Activated CD4-positive, alpha-beta memory T cell treated with anti-CD3 and anti-CD28 coated beads for 36 hours (primary cell): ENCODE measurements at regions of chr18 and their contacts with region 1.

Region 1: GRCh38 chr18:69885841-69886531 is 61.7 kb downstream of the CD226 start:
- DNase-seq: peak; percentile 85
- H3K4me3 Mint-ChIP-seq: peak overlapping the region; percentile 73
- H3K27ac Mint-ChIP-seq: peak overlapping the region; percentile 97
- H3K4me1 Mint-ChIP-seq: peaks cover 86% of the 10 kb centered on the region
- H3K27me3 Mint-ChIP-seq: no peaks in the 10 kb centered on the region

Region 2: DNA sequence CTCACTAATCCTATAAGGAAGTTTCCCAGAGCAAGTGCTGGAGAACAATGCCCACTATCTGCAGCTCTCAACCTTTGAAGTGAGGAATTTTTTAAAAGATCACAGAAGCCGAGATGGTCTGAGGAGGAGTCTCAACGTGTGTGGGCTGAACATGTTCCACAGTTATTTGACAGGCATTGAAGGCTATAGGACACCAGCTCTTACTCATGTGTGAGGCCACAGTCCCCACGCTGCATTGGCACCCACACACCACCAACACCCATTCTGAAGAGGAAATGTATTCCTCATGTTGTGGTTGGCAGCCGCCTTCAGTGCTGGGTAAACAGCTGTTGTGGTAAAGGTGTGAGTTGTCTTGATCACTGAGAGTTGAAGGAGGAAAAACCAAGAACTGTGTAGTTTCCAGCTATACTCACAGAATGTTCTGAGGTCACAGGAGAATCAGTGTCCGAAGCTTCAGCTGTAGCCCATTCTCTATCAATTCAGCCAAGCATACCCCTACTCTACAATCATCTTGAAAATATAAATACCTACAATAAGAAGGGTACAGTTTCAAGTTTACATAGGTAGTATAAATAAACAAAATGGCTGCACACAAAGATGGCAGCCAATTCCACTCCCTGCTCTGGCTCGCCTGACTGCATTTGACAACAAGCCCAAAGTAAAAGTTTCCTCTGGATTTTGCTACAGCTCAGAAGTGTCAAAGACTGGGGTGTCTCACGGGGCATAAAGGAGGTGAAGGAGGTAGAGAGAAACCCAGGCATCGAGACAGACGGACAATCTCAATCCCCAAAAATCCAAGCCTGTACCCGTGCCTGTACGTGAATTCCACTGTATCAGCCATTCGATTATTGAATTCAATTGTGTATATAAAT is 49.6 kb after region 1 on chr18:
- CTCF ChIA-PET with region 1: interaction called, 9 read pairs
- POLR2A ChIA-PET with region 1: interaction called, 22 read pairs
- intact Hi-C with region 1: loop called (anchors 1 kb)
- DNase-seq: peak; percentile 94
- H3K4me3 Mint-ChIP-seq: no peak overlapping the region
- H3K27ac Mint-ChIP-seq: no peak overlapping the region
- H3K4me1 Mint-ChIP-seq: peaks cover 37% of the 10 kb centered on the region
- H3K27me3 Mint-ChIP-seq: no peaks in the 10 kb centered on the region

Region 3: DNA sequence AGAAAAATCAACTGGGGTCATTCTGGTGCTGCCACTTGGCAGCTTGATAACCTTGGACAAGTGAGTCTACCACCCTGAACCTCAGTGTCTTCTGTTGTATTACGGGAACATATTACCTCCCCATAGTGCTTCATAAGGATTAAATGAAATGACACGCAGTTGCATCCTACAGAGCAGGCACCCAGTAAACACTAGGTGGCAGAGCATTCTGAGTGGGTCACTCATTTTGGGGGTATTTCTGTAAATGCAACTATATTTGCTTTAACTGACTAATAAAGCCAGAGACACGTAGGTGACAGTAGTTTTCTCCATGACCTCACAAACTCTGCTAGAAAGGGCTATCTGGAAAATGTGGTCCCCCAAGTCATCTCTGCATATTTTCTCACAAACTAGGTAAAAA is 57.0 kb after region 1 on chr18:
- CTCF ChIA-PET with region 1: interaction called, 3 read pairs
- POLR2A ChIA-PET with region 1: interaction called, 34 read pairs
- intact Hi-C with region 1: loop called (anchors 1 kb)
- DNase-seq: peak; percentile 50
- H3K4me3 Mint-ChIP-seq: peak overlapping the region; percentile 63
- H3K27ac Mint-ChIP-seq: peak overlapping the region; percentile 94
- H3K4me1 Mint-ChIP-seq: peaks cover 84% of the 10 kb centered on the region
- H3K27me3 Mint-ChIP-seq: no peaks in the 10 kb centered on the region

Region 4: GRCh38 chr18:69948919-69949537 is 63.0 kb after region 1 on chr18:
- CTCF ChIA-PET with region 1: interaction called, 3 read pairs
- POLR2A ChIA-PET with region 1: interaction called, 34 read pairs
- intact Hi-C with region 1: loop called (anchors 1 kb)
- DNase-seq: peak; percentile 85
- H3K4me3 Mint-ChIP-seq: no peak overlapping the region
- H3K27ac Mint-ChIP-seq: no peak overlapping the region
- H3K4me1 Mint-ChIP-seq: peaks cover 50% of the 10 kb centered on the region
- H3K27me3 Mint-ChIP-seq: no peaks in the 10 kb centered on the region

Region 5: GRCh38 chr18:69978732-69979715 is 93.0 kb after region 1 on chr18:
- CTCF ChIA-PET with region 1: no interaction called
- POLR2A ChIA-PET with region 1: interaction called, 4 read pairs
- intact Hi-C with region 1: loop called (anchors 1 kb)
- DNase-seq: peak; percentile 25
- H3K4me3 Mint-ChIP-seq: no peak overlapping the region
- H3K27ac Mint-ChIP-seq: peak overlapping the region; percentile 65
- H3K4me1 Mint-ChIP-seq: peaks cover 45% of the 10 kb centered on the region
- H3K27me3 Mint-ChIP-seq: no peaks in the 10 kb centered on the region